ENCODE measurements at regions of chr2 and their contacts with region 1.

Region 1: GRCh38 chr2:192184349-192184748 is 10.4 kb downstream of the TMEFF2 start:
- DNase-seq: no peak
- H3K4me3 ChIP-seq: no peak overlapping the region
- H3K27ac ChIP-seq: no peak overlapping the region
- H3K4me1 ChIP-seq: no peaks in the 10 kb centered on the region
- H3K27me3 ChIP-seq: peaks cover 16% of the 10 kb centered on the region
- CTCF ChIP-seq: no peak

Region 2: DNA sequence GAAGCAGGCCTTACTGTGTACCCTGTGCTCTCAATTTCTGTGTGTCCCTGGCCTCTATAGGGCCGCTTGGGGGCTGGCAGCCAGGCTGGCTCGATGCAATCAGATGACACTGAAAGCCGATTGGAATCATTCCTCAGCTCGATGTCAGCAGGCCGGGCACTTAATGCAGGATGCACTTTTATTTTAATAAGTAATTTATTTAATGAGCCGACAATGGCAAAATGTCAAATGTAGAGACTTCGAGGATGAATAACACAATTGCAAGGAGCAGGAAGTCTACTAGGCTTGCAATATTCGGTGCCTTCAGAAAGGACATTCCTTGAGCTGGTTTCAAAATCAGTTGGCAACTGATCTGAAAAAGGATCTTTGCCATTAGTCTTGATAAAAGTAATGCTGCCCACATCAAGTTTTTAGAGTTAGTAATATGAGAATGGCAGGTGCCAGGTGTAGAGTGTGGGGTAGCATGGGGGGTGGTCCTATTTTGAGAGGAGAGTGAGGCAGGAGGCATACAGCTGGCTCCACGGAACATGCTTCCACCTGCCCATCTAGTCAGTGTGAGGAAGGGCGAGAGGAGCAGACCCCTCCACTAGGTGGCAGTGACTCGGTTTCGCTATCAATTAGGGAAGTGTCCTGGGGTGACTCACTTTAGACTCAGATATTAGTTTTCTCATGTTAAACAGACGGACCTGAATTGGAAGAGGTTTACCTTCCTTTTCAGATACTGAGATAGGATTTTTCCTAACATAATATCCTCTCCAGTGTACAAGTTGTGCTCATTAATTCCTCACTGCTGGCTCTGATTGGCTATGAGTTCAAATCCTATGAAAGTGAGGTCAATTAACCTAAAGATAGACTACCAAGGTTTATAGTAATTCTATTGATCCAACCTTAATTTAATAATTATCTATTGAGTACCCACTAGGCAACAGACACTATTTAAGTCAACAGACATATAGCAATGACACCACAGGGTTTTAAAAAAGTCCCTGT is 425.5 kb before region 1 on chr2:
- CTCF ChIA-PET with region 1: no interaction called
- dilution Hi-C with region 1: no loop called
- in situ Hi-C with region 1: no loop called
- intact Hi-C with region 1: no loop called
- DNase-seq: peak; percentile 80
- H3K4me3 ChIP-seq: no peak overlapping the region
- H3K27ac ChIP-seq: peak overlapping the region; percentile 34
- H3K4me1 ChIP-seq: peaks cover 12% of the 10 kb centered on the region
- H3K27me3 ChIP-seq: no peaks in the 10 kb centered on the region
- CTCF ChIP-seq: peak; percentile 81 to 85

Region 3: DNA sequence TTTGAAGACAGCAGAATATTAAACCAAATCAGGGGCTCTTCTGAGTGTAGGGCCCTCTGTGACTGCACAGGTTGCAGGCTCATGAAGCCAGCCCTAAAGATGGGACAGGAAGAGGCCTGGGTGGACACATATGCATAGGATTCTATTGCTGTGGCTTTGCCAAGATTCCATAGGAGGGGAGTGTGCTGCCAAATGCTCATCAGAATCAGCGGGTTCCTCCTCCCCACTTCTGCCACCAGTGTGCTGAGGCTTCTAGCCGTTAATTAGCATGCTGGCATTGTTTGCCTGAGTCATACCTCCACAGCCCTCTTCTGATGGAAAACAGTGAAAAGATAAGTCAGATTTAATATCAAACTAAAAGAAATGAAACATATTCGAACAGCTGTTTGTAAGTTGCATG is 114.3 kb after region 1 on chr2:
- CTCF ChIA-PET with region 1: no interaction called
- dilution Hi-C with region 1: no loop called
- in situ Hi-C with region 1: loop called (anchors 10 to 25 kb)
- intact Hi-C with region 1: no loop called
- DNase-seq: no peak
- H3K4me3 ChIP-seq: no peak overlapping the region
- H3K27ac ChIP-seq: no peak overlapping the region
- H3K4me1 ChIP-seq: no peaks in the 10 kb centered on the region
- H3K27me3 ChIP-seq: peaks cover 3% of the 10 kb centered on the region
- CTCF ChIP-seq: no peak

Region 4: DNA sequence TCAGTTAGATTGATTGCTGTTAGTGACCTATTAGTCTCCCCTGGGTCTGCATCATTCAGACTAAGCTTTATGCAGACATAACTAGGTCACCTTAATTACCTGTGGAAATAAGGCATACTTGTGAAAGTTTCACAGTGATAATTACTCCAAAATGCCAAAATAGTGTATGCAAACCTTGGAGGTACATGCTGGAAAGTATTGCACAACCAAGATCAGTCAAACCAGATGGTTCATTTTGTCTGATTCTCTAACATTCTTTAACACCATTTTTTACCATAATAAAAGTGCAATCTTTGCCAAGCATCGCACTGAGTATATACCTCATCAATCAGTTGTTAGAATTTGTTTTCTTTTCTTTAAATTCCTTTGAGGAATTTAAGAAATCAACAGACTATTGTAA is 196.7 kb after region 1 on chr2:
- CTCF ChIA-PET with region 1: no interaction called
- dilution Hi-C with region 1: no loop called
- in situ Hi-C with region 1: no loop called
- intact Hi-C with region 1: no loop called
- DNase-seq: no peak
- H3K4me3 ChIP-seq: no peak overlapping the region
- H3K27ac ChIP-seq: no peak overlapping the region
- H3K4me1 ChIP-seq: no peaks in the 10 kb centered on the region
- H3K27me3 ChIP-seq: no peaks in the 10 kb centered on the region
- CTCF ChIP-seq: no peak

Measured in mammary epithelial cell (primary cell).